ENCODE measurements at regions of chr14 and their contacts with region 1.

Region 1: DNA sequence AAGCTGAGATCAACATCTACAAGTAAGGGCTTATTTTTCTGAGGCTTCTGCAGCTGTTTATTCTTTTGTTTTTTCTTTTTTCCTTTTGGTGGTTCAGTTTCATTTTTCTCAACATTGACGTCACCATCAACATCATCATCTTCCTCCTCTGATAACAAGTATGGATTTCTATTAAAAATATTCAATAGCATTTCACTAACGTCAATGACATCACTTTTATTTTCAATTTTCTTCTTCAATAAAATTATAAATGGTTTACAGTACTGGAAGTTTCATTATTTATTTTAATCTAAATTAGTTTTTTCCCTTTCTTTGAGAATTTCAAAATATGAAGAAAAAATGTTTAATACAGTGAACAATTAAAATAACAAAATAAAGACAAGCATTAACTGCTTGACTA is 23.9 kb downstream of the NEMF start:
- DNase-seq: no peak
- ATAC-seq: no peak

Region 2: DNA sequence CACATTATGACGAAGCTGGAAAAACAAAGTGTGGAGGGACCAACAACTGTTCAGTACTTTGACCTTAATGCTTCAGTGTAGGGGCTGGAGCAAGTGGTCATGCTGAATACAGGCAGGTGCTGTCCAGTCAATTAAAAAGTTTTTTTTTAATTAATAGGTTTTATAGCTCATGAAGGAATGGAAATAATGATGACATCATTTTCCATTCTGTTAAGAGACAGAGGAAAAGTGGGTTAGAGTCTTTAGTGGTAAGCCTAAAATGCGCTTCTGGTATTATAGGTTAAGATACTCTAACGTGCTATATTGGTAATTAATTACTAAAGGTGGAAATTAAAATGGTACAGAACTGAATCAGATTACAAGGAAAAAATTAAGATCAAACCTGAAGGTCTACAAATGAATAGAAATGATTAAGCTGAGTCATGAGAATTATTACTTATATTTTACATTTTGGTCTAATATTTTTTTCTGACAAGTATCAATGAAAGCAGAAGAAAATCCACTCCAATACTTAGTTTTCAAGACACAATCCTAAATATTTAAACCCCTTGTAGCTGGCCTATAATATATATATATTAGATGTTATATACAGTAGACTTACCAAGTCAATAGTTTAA is 45.1 kb before region 1 on chr14:
- intact Hi-C with region 1: loop called in 1 of 2 experiments (anchors 5 kb)
- DNase-seq: no peak
- ATAC-seq: no peak

Region 3: GRCh38 chr14:49796025-49796424 is 32.6 kb before region 1 on chr14:
- intact Hi-C with region 1: loop called in 1 of 2 experiments (anchors 5 kb)
- DNase-seq: no peak
- ATAC-seq: no peak

Region 4: GRCh38 chr14:50432131-50432530 is 603.5 kb after region 1 on chr14:
- intact Hi-C with region 1: no loop called
- DNase-seq: no peak
- ATAC-seq: no peak